ENCODE measurements at regions of chr7 and their contacts with region 1.

Region 1: GRCh38 chr7:95684037-95684436 is 87.7 kb upstream of the PDK4 start:
- DNase-seq: no peak
- H3K4me3 ChIP-seq: no peak overlapping the region
- CTCF ChIP-seq: no peak

Region 2: DNA sequence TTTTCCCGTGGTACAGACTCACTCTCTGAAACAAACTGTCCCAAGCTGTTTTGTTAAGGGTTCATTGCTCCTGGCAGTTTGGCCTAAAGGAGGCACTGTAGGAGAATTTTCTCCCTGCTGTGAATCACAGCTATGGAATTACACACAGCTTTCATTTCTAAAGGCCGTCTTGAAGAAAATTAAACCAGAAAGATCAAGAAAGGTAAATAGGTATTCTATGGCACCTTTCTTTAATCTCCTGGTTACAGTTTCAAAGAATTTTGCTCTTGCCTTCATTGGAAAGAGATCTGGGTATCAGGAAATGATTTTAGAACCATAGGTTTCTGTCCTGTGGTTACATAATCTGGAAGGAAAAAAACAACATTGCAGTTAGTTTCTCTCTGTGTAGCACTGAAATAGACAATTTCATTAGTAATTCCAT is 138.9 kb before region 1 on chr7:
- CTCF ChIA-PET with region 1: interaction called, 189 read pairs
- POLR2A ChIA-PET with region 1: no interaction called
- DNase-seq: no peak
- H3K4me3 ChIP-seq: peak overlapping the region; percentile 24; the same call in 1 of the 2 replicates
- CTCF ChIP-seq: peak; percentile 61